AG04450 (cell line): ENCODE measurements at regions of chr6 and their contacts with region 1.

Region 1: DNA sequence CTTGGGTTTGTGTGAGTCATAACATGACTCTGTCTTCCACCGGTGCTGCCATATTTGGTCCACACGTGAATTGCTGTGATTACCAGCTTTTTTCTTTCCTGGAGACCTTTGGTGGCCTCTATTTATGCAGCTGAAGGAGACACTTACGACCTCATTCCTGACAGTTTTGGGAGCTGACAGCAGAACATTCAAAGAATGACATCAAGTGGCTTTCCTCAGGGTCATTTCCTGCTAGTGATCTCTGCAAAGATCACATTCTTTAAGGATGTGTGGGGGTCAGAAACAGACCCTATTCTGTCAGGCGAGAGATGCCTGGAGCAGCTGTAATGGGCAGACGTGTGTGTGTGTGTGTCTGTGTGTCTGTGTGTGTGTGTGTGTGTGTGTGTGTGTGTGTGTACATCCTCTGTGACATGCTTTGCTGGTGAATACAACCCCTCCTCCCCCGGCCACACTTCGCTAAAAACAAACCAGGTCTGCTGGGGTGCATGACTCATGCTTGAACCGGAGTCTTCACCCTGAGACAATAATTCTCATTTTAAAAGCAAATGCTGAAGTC is 115.6 kb downstream of the TMEM170B start:
- DNase-seq: peak; percentile 83
- H3K4me3 ChIP-seq: no peak overlapping the region
- H3K27ac ChIP-seq: peak overlapping the region; percentile 89
- H3K27me3 ChIP-seq: no peaks in the 10 kb centered on the region
- CTCF ChIP-seq: no peak

Region 2: DNA sequence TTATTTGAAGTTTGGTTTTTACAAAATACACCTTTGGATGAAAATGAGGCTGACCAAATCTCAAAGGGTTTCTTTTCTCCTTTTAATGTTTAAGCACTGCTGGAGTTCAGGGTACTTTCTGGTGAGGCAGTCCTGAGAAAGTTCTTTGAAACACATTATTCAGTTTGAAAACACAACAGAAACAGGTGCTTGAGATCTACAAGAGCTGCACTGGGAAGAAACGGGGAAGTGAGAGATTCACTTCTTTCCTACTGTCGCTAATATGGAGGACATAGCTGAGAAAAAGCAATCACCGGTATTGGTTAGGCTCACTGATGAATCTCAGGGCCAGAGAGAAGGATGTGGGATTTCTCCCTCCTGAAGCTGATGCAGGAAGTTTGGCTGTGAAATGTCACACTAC is 138.4 kb before region 1 on chr6:
- CTCF ChIA-PET with region 1: no interaction called
- POLR2A ChIA-PET with region 1: no interaction called
- DNase-seq: no peak
- H3K4me3 ChIP-seq: no peak overlapping the region
- H3K27ac ChIP-seq: no peak overlapping the region
- H3K27me3 ChIP-seq: peaks cover 2% of the 10 kb centered on the region
- CTCF ChIP-seq: no peak

Region 3: GRCh38 chr6:11585426-11586016 is 67.6 kb before region 1 on chr6:
- CTCF ChIA-PET with region 1: interaction called, 54 read pairs
- POLR2A ChIA-PET with region 1: interaction called, 7 read pairs
- DNase-seq: peak; percentile 55
- H3K4me3 ChIP-seq: no peak overlapping the region
- H3K27ac ChIP-seq: no peak overlapping the region
- H3K27me3 ChIP-seq: no peaks in the 10 kb centered on the region
- CTCF ChIP-seq: peak; percentile 58

Region 4: GRCh38 chr6:11665604-11666326 is 12.7 kb after region 1 on chr6:
- CTCF ChIA-PET with region 1: interaction called, 17 read pairs
- POLR2A ChIA-PET with region 1: no interaction called
- DNase-seq: no peak
- H3K4me3 ChIP-seq: no peak overlapping the region
- H3K27ac ChIP-seq: no peak overlapping the region
- H3K27me3 ChIP-seq: no peaks in the 10 kb centered on the region
- CTCF ChIP-seq: no peak

Region 5: GRCh38 chr6:11688425-11688709 is 35.3 kb after region 1 on chr6:
- CTCF ChIA-PET with region 1: interaction called, 10 read pairs
- POLR2A ChIA-PET with region 1: interaction called, 3 read pairs
- DNase-seq: no peak
- H3K4me3 ChIP-seq: no peak overlapping the region
- H3K27ac ChIP-seq: no peak overlapping the region
- H3K27me3 ChIP-seq: no peaks in the 10 kb centered on the region
- CTCF ChIP-seq: no peak

Region 6: DNA sequence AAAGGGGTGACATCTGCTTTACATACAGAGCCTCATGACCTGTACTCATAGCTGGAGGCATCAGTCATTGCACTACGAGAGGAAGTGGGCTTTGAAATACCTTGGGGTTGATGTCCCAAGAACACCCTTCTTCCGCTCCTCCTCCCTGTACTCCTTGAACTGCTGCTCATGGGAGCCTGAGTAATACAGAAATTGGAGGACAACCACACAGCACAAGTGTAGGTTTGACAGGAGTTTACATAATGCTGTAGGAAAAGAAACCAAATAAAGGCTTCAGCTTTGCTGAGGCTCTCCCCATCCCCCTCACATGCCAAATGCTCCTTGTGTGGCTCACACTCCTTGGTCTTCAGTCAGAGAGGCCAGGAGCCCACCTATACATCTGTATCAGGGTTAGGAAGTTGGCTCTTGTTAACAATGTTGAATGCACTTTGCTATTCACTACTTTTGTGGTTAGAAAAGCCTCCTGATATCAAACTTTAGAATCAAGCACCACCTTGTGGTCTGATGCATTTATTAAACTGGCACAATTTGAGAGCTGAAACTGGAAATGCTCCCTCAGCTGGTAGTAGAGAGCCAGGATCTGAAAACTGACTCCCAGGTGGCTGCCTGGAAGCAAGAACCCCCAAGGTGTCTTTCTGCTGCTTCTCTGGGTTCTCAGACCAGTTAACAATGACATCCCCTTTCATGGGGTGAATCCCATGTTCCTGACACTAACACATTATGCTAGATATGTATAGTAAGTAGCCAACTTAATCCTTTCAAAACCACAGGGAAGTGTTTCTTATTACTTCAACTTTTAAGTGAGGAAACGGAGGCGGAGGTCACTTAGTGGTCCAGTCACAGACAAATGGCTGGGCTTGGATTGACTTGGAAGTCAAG is 580.8 kb after region 1 on chr6:
- CTCF ChIA-PET with region 1: interaction called, 30 read pairs
- POLR2A ChIA-PET with region 1: interaction called, 3 read pairs
- DNase-seq: peak; percentile 60
- H3K4me3 ChIP-seq: no peak overlapping the region
- H3K27ac ChIP-seq: peak overlapping the region; percentile 55
- H3K27me3 ChIP-seq: no peaks in the 10 kb centered on the region
- CTCF ChIP-seq: peak; percentile 85

Region 7: DNA sequence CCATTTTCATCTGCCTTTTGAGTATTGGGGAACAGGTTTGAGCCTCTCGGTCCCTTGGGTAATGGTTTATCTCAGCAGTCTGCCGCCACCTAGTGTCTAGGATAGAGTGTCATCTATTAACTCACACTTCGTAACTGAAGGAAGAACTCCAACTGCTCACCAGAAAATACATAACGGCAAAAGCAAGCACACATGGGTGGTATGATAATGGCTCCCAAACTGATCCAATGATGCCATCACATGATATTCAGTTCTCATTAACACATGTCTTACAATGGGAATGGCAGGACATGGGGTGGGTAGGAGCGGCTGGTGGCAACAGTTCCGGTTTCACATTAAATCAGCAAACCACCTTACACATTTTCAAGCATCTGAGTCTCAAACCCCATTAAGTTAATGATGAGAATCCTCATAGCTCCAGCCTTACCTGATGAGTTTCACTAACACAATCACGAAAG is 952.8 kb after region 1 on chr6:
- CTCF ChIA-PET with region 1: interaction called, 14 read pairs
- POLR2A ChIA-PET with region 1: no interaction called
- DNase-seq: peak; percentile 36
- H3K4me3 ChIP-seq: no peak overlapping the region
- H3K27ac ChIP-seq: no peak overlapping the region
- H3K27me3 ChIP-seq: no peaks in the 10 kb centered on the region
- CTCF ChIP-seq: peak; percentile 82